ENCODE measurements at regions of chr12 and their contacts with region 1.

Region 1: DNA sequence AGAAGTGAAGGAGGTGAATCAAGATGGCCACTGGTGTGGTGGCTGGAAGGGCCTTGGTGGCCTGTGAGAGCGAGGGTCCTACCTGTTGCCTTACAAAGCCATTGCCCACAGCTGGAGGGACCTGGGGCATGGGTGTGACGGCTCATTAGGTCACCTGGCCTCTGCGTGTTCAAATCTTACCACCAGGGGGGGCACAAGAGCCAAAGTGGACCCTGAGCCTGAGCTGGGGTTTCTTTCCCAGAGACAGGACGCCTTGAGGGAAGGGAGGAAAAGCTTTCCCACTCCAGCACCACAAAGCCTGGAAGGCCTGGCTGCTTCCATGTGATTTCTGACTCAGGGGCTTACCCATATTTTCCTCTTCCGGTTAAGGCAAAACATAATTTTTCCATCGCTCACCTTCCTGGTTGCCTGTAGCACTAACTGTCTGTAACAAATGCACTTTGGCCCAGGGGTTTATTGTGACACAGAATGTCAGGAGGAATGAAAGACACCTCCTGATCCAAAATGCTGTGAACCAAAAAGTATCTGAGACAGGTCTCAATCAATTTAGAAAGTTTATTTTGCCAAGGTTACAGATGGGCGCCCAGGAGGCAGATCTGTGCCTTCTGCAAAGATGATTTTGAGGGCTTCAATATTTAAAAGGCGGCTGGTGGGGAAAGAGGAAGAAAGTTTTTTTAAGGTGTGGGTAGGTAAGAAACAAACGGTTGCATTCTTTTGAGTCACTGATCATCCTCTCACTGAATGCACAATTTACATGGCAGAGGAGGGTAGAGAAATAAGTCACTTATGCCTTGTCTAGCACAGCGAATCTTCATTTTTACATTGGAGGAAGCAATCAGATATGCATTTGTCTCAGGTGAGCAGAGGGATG is 4.3 kb upstream of the CD9 start:
- DNase-seq: peak; percentile 16
- ATAC-seq: peak; percentile 75
- H3K4me3 ChIP-seq: no peak overlapping the region
- H3K27ac ChIP-seq: no peak overlapping the region
- H3K4me1 ChIP-seq: no peaks in the 10 kb centered on the region; the same call in 1 of the 2 replicates
- H3K27me3 ChIP-seq: peaks cover 2 to 14% of the 10 kb centered on the region in 2 experiments; a peak in 3 of 4 replicates
- CTCF ChIP-seq: peak; percentile 90 to 95 (median 94); a peak in 5 of 6 replicates
- EP300 ChIP-seq: no peak
- POLR2A ChIP-seq: no peak
- RAD21 ChIP-seq: peak; percentile 80

Region 2: DNA sequence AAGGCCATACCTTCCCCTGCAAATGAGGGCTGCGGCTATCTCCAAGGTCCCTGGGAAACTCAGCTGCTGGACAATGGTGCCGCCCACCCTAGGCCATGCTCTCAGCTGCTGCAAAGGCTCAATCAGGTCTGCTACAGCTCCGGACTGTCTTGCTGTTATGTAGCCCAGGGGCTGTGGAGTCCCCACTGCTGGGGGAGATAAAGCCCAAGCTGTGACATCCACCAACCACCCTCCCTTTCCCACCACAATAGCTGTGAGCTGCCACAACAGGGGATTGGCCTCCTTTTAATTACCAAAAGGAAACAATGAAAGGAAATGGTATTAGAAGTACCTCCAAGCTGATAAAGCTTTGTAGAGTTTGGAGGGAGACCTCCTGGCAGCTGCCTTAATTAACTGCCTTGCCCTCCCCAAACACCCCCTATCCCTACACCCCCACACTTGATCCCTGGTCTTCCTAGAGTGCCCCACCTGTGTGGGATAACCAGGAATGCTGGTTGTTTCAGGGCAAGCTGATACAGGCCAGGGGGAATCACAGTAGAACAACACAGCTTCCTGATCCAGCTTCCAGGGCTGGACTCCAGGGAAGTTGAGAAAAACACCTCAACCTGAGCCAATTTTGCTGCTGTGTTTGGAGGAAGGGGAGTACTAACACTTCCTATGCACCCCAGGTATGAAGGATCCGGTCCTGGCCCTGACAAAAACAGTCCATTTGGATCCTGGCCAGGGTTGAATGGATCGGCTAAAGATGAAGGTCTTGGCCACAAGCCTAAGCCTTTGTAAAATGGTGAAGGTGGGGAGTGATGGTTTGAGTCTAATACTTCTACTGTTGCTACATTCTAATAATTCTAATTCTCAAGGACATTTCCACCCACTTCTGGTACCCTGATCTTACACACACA is 71.2 kb before region 1 on chr12 and contains the start of gene VWF:
- CTCF ChIA-PET with region 1: no interaction called
- POLR2A ChIA-PET with region 1: no interaction called
- RAD21 ChIA-PET with region 1: no interaction called
- SMC1A ChIA-PET with region 1: no interaction called
- in situ Hi-C with region 1: no loop called
- intact Hi-C with region 1: no loop called
- DNase-seq: no peak
- ATAC-seq: no peak
- H3K4me3 ChIP-seq: no peak within 1 kb of the TSS
- H3K27ac ChIP-seq: no peak within 1 kb of the TSS
- H3K4me1 ChIP-seq: no peaks in the 10 kb centered on the region
- H3K27me3 ChIP-seq: peaks cover 0 to 8% of the 10 kb centered on the region in 2 experiments; a peak in 2 of 4 replicates
- CTCF ChIP-seq: no peak
- EP300 ChIP-seq: no peak
- POLR2A ChIP-seq: no peak
- RAD21 ChIP-seq: no peak
- polyA plus RNA-seq, gene VWF: not detected

Region 3: DNA sequence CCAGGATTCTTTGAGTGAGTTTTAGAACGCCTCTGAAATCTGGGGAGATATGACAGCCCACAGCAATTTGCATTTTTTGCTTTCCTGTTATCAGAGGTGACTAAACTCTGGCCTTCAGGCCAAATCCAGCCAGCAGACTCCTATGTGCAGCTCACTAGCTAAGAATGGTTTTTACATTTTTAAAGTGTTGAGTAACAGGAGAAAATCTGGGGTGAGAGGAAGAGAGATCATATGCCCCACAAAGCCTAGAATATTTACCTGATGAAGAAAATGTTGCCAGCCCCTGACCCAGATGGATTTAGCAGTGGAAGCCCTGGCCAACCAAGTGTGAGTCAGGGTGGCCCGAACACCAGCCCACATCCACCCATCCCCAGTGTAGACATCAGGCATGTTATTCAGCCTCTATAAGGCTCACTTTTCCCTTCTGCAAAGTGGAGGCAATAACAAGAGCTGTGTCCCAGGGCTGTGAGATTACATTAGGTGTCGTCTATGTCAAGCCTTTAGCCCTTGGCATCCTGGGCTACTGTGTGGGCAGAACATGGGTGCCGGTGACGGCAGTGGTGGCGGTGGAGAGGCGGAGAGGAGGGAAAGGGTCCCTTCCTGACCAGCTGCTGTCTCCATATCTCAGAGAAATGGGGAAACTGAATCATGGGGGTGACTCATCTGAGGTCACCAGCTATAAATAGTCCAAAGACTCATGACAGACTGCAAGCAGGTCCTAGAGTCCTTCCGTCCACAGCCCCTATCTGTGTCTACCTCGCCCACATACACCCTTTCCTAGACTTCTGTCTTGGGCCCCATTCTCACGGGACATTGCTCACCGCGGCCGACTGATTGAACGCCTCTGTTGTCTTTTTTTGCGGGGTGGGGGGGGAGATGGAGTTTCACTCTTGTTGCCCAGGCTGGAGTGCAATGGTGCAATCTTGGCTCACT is 28.3 kb before region 1 on chr12:
- CTCF ChIA-PET with region 1: interaction called, 31 read pairs
- POLR2A ChIA-PET with region 1: interaction called, 9 read pairs
- RAD21 ChIA-PET with region 1: interaction called, 9 read pairs
- SMC1A ChIA-PET with region 1: interaction called, 7 read pairs
- in situ Hi-C with region 1: no loop called
- intact Hi-C with region 1: no loop called
- DNase-seq: peak; percentile 62
- ATAC-seq: peak; percentile 91
- H3K4me3 ChIP-seq: no peak overlapping the region
- H3K27ac ChIP-seq: peak overlapping the region; percentile 5
- H3K4me1 ChIP-seq: peaks cover 19% of the 10 kb centered on the region
- H3K27me3 ChIP-seq: no peaks in the 10 kb centered on the region
- CTCF ChIP-seq: no peak
- EP300 ChIP-seq: peak; percentile 23 to 53; a peak in 2 of 4 replicates
- POLR2A ChIP-seq: no peak
- RAD21 ChIP-seq: no peak

Region 4: DNA sequence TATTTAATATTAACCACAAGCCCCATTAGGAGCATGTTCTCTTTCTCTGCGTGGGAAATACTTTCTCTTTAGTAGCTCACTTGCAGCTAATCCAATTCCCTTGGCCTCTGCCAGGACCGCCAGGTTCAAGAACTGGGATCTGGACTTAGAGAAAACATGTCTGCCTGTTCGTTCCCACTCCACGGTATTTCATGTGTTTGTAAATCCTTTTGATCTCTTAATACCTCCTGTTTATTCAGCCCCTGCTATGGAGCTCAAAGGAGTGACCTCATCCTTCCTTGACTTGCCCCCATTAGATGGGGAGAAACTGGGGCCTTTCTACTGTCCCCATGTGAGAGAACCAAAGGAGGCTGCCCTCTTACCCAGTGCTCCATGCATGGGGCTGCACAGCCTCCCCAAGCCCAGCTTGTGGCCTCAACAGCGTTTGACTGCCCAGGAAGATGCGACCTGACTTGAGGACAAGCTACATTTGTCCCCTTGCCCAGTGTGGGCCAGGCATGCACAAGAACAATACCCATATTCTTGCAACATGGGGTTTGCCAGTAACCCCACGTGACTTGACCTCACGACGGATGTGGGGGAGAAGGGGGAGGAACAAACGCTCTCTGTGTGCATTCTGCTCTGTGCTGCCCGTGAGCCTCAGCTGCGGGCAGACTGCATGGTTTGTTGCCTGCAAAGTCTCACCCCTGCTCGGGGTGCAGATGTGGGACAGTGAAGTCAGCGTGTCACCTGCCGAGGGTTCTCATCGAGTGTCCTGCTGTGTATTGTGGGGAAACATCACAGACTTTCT is 34.6 kb after region 1 on chr12:
- CTCF ChIA-PET with region 1: interaction called, 29 read pairs
- POLR2A ChIA-PET with region 1: interaction called, 12 read pairs
- RAD21 ChIA-PET with region 1: interaction called, 27 read pairs
- SMC1A ChIA-PET with region 1: interaction called, 72 read pairs
- in situ Hi-C with region 1: no loop called
- intact Hi-C with region 1: no loop called
- DNase-seq: peak; percentile 69
- ATAC-seq: peak; percentile 98
- H3K4me3 ChIP-seq: no peak overlapping the region
- H3K27ac ChIP-seq: no peak overlapping the region
- H3K4me1 ChIP-seq: peaks cover 9% of the 10 kb centered on the region
- H3K27me3 ChIP-seq: no peaks in the 10 kb centered on the region; a peak in 1 of 4 replicates
- CTCF ChIP-seq: no peak
- EP300 ChIP-seq: peak; percentile 67 to 84; a peak in 3 of 4 replicates
- POLR2A ChIP-seq: peak; percentile 16; the same call in 1 of the 2 replicates
- RAD21 ChIP-seq: no peak

Region 5: GRCh38 chr12:6272300-6273204 is 76.7 kb after region 1 on chr12:
- CTCF ChIA-PET with region 1: interaction called, 401 read pairs
- POLR2A ChIA-PET with region 1: interaction called, 43 read pairs
- RAD21 ChIA-PET with region 1: interaction called, 304 read pairs
- SMC1A ChIA-PET with region 1: interaction called, 107 read pairs
- in situ Hi-C with region 1: loop called (anchors 5 kb)
- intact Hi-C with region 1: no loop called
- DNase-seq: no peak
- ATAC-seq: peak; percentile 75
- H3K4me3 ChIP-seq: no peak overlapping the region
- H3K27ac ChIP-seq: no peak overlapping the region
- H3K4me1 ChIP-seq: peaks cover 14% of the 10 kb centered on the region
- H3K27me3 ChIP-seq: no peaks in the 10 kb centered on the region
- CTCF ChIP-seq: no peak
- EP300 ChIP-seq: no peak
- POLR2A ChIP-seq: no peak
- RAD21 ChIP-seq: no peak

Region 6: GRCh38 chr12:6285063-6285477 is 89.2 kb after region 1 on chr12:
- CTCF ChIA-PET with region 1: interaction called, 401 read pairs
- POLR2A ChIA-PET with region 1: interaction called, 43 read pairs
- RAD21 ChIA-PET with region 1: interaction called, 304 read pairs
- SMC1A ChIA-PET with region 1: interaction called, 107 read pairs
- in situ Hi-C with region 1: no loop called
- intact Hi-C with region 1: loop called (anchors 1 kb)
- DNase-seq: no peak
- ATAC-seq: peak; percentile 96
- H3K4me3 ChIP-seq: no peak overlapping the region
- H3K27ac ChIP-seq: no peak overlapping the region
- H3K4me1 ChIP-seq: no peaks in the 10 kb centered on the region
- H3K27me3 ChIP-seq: no peaks in the 10 kb centered on the region; a peak in 1 of 4 replicates
- CTCF ChIP-seq: peak; percentile 91 to 96 (median 91); a peak in 5 of 6 replicates
- EP300 ChIP-seq: no peak
- POLR2A ChIP-seq: no peak
- RAD21 ChIP-seq: peak; percentile 95

Region 7: DNA sequence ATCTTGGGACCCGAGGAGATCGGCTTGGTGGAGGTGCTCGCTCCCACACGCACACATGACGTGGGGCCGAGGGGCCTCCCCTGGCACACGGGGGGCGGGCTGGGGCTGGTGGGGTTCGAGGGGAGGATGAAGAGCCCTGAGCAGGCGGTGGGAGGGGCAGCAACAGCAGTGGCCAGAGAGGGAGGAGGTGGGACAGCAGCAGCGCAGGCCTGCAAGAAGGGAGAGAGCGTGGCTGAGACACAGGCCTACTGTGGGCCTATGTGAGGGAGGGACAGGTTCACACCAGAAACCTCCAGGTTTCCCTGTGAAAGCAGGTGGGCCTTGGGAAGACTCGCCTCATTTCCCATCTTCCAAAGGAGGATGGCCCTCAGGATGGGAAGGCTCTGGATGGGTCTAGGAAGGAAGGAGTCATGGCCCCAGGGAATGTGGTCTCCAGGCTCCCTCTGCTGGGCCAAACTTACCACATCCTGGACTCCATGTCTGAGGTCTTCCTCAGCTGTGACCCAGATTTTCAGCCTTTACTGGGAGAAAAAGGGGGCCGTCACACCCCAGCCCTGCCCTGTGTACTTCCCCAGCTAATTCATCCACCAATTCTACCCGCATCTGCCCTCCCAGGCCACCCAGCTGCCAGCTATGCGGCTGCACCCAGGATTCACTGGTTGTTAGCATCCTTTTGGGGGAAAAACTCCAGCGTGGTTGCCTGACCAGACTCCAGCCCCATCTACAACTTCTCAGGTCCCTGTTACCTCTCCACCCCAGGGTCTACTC is 501.9 kb after region 1 on chr12:
- CTCF ChIA-PET with region 1: no interaction called
- POLR2A ChIA-PET with region 1: no interaction called
- RAD21 ChIA-PET with region 1: no interaction called
- SMC1A ChIA-PET with region 1: no interaction called
- in situ Hi-C with region 1: no loop called
- intact Hi-C with region 1: no loop called
- DNase-seq: no peak
- ATAC-seq: peak; percentile 65
- H3K4me3 ChIP-seq: no peak overlapping the region
- H3K27ac ChIP-seq: no peak overlapping the region
- H3K4me1 ChIP-seq: peaks cover 12% of the 10 kb centered on the region
- H3K27me3 ChIP-seq: peaks cover 13 to 16% of the 10 kb centered on the region in 2 experiments
- CTCF ChIP-seq: peak; percentile 50 to 63 (median 60); a peak in 5 of 6 replicates
- EP300 ChIP-seq: no peak
- POLR2A ChIP-seq: no peak
- RAD21 ChIP-seq: peak; percentile 71